Ovary (tissue), 10 donors: ENCODE measurements at regions of chr9 and their contacts with region 1.

Region 1: GRCh38 chr9:107489687-107490605 is at the start of gene KLF4:
- DNase-seq: peak; percentile 91 to 95 (median 95)
- H3K4me3 ChIP-seq: peak within 1 kb of the TSS; percentile 64
- H3K27ac ChIP-seq: peak within 1 kb of the TSS; percentile 69 to 83
- H3K4me1 ChIP-seq: peaks cover 2% of the 10 kb centered on the region
- H3K27me3 ChIP-seq: no peaks in the 10 kb centered on the region
- CTCF ChIP-seq: peak in 2 of 3 donors; percentile 14 to 45
- EP300 ChIP-seq: peak; percentile 27
- POLR2A ChIP-seq: peak; percentile 95
- total RNA-seq, gene KLF4: 29.2 to 138 (median 71.2) TPM

Region 2: DNA sequence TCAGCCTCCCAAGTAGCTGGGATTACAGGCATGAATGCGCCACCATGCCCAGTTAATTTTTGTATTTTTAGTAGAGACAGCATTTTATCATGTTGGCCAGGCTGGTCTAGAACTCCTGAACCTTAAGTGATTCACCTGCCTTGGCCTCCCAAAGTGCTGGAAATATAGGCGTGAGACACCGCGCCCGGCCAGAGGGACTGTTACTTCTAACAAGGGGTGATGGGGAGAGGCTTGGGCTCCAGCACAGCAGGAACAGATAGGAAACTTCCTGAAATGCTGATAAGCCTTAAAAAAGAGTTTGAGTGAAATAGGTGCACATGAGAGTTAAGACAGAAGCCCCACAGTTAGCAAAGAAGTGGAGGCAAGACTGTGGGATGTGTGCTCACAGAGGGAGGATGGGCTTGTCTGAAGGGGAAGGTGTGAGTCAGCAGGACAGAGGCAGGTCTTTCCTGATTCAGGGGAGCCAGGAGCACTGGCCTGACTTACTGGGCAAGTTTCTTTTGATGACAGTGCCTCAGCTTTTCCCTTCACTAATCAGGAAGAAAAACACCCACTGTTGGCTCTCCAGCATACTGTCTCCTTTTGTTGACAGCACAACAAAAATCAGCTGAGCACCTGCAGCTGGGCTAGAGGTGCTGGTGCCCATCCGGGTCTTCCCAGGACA is 138.4 kb before region 1 on chr9:
- intact Hi-C with region 1: no loop called
- DNase-seq: no peak
- H3K4me3 ChIP-seq: no peak overlapping the region
- H3K27ac ChIP-seq: no peak overlapping the region
- H3K4me1 ChIP-seq: no peaks in the 10 kb centered on the region
- H3K27me3 ChIP-seq: no peaks in the 10 kb centered on the region
- CTCF ChIP-seq: no peak
- EP300 ChIP-seq: no peak
- POLR2A ChIP-seq: no peak

Region 3: DNA sequence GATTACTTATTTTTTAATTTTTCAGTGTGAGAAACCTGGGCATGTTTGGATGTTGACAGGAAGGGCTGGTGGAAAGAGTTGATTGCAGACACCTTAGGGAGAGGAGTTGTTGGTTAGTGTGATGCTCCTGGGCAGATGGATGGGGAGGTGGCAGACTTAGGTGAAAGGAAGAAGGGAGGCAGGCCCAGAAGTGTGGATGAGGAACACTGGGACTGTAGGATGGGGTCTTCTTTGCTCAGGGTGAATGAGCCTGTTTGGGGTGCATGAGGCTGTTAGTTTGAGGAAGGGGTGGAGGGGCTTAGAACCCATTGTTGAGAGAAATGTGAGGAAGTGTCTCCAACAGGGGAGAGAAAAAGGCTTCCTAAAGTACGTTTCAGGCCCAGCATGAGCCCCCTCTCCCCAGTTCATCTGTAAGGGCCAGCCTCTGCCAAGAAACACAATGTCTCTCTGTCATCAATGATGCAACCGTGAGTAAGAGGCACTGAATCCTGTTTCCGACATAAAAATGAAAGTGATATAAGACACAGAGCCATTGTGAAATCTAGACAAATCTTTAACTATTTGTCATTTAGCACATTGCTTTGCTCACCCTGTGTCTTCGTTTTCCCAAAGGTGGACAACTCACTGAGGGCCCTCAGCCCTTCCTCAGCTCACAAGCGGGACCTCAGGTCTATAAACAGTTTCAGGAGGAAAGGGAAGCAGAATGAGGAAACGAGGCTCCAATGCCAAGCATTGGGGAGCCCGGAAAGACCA is 58.3 kb after region 1 on chr9:
- intact Hi-C with region 1: no loop called
- DNase-seq: peak in 2 of 5 donors; percentile 11 to 69
- H3K4me3 ChIP-seq: no peak overlapping the region
- H3K27ac ChIP-seq: no peak overlapping the region
- H3K4me1 ChIP-seq: peaks cover 8% of the 10 kb centered on the region
- H3K27me3 ChIP-seq: no peaks in the 10 kb centered on the region
- CTCF ChIP-seq: no peak
- EP300 ChIP-seq: no peak
- POLR2A ChIP-seq: no peak

Region 4: GRCh38 chr9:107637421-107638420 is 147.8 kb after region 1 on chr9:
- intact Hi-C with region 1: loop called (anchors 1 to 5 kb)
- DNase-seq: peak; percentile 94 to 98 (median 96)
- H3K4me3 ChIP-seq: peak overlapping the region; percentile 40
- H3K27ac ChIP-seq: peak overlapping the region; percentile 98 to 100
- H3K4me1 ChIP-seq: peaks cover 12% of the 10 kb centered on the region
- H3K27me3 ChIP-seq: no peaks in the 10 kb centered on the region
- CTCF ChIP-seq: peak in 2 of 3 donors; percentile 66 to 69
- EP300 ChIP-seq: peak; percentile 81
- POLR2A ChIP-seq: peak; percentile 99

Region 5: GRCh38 chr9:107749787-107750444 is 260.0 kb after region 1 on chr9:
- intact Hi-C with region 1: loop called in 1 of 4 experiments (anchors 5 kb)
- DNase-seq: peak; percentile 83 to 94 (median 89)
- H3K4me3 ChIP-seq: no peak overlapping the region
- H3K27ac ChIP-seq: peak overlapping the region; percentile 14 to 88
- H3K4me1 ChIP-seq: peaks cover 13% of the 10 kb centered on the region
- H3K27me3 ChIP-seq: no peaks in the 10 kb centered on the region
- CTCF ChIP-seq: no peak
- EP300 ChIP-seq: no peak
- POLR2A ChIP-seq: peak; percentile 16

Region 6: DNA sequence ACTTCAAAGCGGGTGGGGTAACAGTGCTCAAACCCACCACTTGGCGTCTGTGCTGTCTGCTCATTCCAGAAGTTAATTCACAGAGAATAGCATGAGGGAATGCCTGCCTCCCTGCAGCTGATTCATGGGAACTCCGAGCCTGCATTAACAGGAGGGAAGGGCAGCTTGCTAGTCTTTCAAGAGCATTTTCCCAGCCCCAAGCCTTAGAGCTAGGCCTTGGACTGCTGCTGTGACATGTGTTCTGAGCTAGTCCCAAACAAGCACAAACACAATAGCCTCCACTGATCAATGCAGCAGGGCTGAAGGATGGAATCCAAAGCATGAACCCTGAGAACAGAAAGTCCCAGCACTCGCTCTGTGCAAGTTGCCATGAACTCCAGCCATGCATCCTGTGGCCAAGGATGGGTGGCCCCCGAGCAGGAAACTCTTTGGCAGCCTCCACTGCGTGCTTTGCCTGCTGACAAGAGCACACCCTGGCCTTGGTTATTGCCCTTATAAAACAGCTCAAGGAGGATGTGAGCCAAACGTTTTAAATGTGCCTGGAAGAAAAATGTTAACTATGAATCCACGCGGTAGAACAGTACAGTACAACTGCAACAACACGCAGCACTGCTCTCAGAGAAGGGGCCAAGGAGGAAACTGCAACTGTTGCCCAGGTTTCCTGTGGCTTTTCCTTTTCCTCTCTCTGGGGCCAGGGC is 652.7 kb after region 1 on chr9:
- intact Hi-C with region 1: loop called in 2 of 4 experiments (anchors 2 to 10 kb)
- DNase-seq: peak; percentile 72 to 91 (median 76)
- H3K4me3 ChIP-seq: no peak overlapping the region
- H3K27ac ChIP-seq: peak overlapping the region in 1 of 2 donors; percentile 43
- H3K4me1 ChIP-seq: peaks cover 4% of the 10 kb centered on the region
- H3K27me3 ChIP-seq: no peaks in the 10 kb centered on the region
- CTCF ChIP-seq: no peak
- EP300 ChIP-seq: peak; percentile 42
- POLR2A ChIP-seq: no peak

Region 7: GRCh38 chr9:108439911-108440315 is 950.0 kb after region 1 on chr9:
- intact Hi-C with region 1: loop called in 1 of 4 experiments (anchors 10 kb)
- DNase-seq: no peak
- H3K4me3 ChIP-seq: no peak overlapping the region
- H3K27ac ChIP-seq: no peak overlapping the region
- H3K4me1 ChIP-seq: no peaks in the 10 kb centered on the region
- H3K27me3 ChIP-seq: no peaks in the 10 kb centered on the region
- CTCF ChIP-seq: no peak
- EP300 ChIP-seq: no peak
- POLR2A ChIP-seq: no peak